ENCODE measurements at regions of chr1 and their contacts with region 1.

Region 1: DNA sequence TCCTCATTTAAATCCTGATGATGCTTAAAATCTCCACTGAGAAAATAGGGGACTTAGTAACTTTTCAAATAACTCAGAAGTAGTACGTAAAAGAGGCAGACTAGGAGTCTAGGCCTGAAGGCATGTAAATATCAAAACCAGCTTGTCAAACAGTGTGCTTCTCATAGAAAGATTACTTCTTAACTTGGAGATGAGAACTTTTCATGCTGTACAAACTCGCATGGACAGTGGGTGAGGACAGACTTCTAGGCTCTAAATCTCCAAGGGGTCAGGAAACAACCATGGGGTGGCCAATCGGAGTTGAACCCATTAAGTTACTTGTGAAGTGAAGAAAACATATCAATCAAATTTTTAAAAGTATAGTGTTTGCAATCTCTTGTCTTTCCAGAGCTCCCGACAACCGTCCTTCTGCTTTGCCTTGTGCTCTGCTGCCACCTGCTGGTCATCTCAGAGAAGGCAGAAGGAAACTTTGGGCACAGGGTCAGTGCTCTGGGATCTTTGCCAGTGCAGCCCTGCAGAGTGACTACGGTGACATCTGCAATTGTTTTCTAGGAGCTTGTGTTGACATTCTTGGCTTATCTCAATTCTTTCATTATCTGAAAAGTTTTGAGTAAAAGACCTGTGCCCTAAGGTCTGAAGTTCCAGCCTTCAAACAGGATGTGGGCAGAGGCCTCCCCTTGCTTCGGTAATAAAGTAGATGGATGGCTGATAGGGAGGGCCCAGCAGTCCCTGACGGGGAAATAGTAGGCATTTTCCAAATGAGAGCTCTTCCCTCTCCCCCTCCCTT is 105.1 kb upstream of the PDE4B start:
- DNase-seq: peak; percentile 72 to 92 (median 84)
- H3K4me3 ChIP-seq: peak overlapping the region in 1 of 59 donors; percentile 17
- H3K27ac ChIP-seq: peak overlapping the region in 52 of 59 donors; percentile 2 to 90 (median 75)
- H3K27me3 ChIP-seq: no peaks in the 10 kb centered on the region
- CTCF ChIP-seq: peak; percentile 80 to 100 (median 98)

Region 2: DNA sequence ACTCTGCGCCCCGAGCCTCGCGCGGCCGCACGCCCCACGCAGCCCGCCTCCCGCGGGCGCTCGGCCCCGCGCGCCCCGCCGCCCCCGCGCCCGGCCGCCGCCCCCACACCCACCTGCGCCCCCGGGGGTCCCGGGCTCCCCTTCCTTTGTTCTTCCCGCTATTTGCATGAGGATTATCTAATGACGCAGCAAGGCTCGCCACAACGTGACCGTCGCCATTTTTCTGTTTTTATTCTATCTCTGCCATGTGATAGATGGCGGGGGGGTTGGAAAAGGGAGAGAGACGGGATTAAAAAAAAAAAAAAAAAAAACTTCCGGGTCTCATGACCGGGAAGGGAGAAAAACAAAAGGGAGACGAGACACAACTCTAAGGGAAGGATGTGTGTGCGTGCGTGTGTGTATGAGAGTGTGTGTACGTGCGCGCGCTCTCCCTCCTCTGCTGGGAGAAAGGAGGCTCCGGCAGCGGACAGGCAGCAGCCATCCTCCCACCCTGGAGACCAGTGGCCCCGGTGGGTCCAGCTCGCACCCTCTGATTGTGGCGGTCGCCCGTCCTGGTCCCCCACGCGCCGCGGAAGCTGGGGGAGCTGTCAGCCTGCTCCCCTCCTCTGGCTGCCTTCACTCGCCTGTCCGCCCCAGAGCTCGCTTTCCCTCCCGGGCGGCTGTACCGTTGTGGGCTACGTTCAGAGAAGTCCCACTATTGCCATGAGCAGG is 620.0 kb before region 1 on chr1:
- intact Hi-C with region 1: loop called (anchors 5 kb)
- DNase-seq: peak; percentile 50 to 84 (median 74)
- H3K4me3 ChIP-seq: peak overlapping the region; percentile 55 to 100 (median 92)
- H3K27ac ChIP-seq: peak overlapping the region; percentile 95 to 100 (median 100)
- H3K27me3 ChIP-seq: no peaks in the 10 kb centered on the region
- CTCF ChIP-seq: peak in 8 of 56 donors; percentile 7 to 24 (median 16)

Region 3: GRCh38 chr1:65214340-65215027 is 473.1 kb before region 1 on chr1:
- intact Hi-C with region 1: loop called (anchors 2 to 5 kb)
- DNase-seq: no peak
- H3K4me3 ChIP-seq: no peak overlapping the region
- H3K27ac ChIP-seq: no peak overlapping the region
- H3K27me3 ChIP-seq: no peaks in the 10 kb centered on the region
- CTCF ChIP-seq: no peak

Region 4: GRCh38 chr1:65431111-65431705 is 256.4 kb before region 1 on chr1:
- intact Hi-C with region 1: loop called (anchors 2 to 5 kb)
- DNase-seq: no peak
- H3K4me3 ChIP-seq: no peak overlapping the region
- H3K27ac ChIP-seq: peak overlapping the region in 46 of 59 donors; percentile 0 to 76 (median 46)
- H3K27me3 ChIP-seq: no peaks in the 10 kb centered on the region
- CTCF ChIP-seq: peak; percentile 42 to 87 (median 76)

Region 5: GRCh38 chr1:65958561-65959350 is 271.1 kb after region 1 on chr1:
- intact Hi-C with region 1: loop called in 1 of 2 experiments (anchors 5 kb)
- DNase-seq: peak in 1 of 10 donors; percentile 8
- H3K4me3 ChIP-seq: peak overlapping the region in 29 of 59 donors; percentile 1 to 56 (median 25)
- H3K27ac ChIP-seq: peak overlapping the region in 55 of 59 donors; percentile 1 to 99 (median 71)
- H3K27me3 ChIP-seq: no peaks in the 10 kb centered on the region
- CTCF ChIP-seq: peak; percentile 74 to 100 (median 88)